ENCODE measurements at regions of chr11 and their contacts with region 1.

Region 1: GRCh38 chr11:102914238-102915043 is 39.7 kb upstream of the MMP12 start:
- DNase-seq: peak; percentile 27
- H3K4me3 Mint-ChIP-seq: no peak overlapping the region
- H3K27ac Mint-ChIP-seq: no peak overlapping the region
- H3K4me1 Mint-ChIP-seq: no peaks in the 10 kb centered on the region
- H3K27me3 Mint-ChIP-seq: peaks cover 28% of the 10 kb centered on the region
- CTCF ChIP-seq: peak; percentile 45

Region 2: DNA sequence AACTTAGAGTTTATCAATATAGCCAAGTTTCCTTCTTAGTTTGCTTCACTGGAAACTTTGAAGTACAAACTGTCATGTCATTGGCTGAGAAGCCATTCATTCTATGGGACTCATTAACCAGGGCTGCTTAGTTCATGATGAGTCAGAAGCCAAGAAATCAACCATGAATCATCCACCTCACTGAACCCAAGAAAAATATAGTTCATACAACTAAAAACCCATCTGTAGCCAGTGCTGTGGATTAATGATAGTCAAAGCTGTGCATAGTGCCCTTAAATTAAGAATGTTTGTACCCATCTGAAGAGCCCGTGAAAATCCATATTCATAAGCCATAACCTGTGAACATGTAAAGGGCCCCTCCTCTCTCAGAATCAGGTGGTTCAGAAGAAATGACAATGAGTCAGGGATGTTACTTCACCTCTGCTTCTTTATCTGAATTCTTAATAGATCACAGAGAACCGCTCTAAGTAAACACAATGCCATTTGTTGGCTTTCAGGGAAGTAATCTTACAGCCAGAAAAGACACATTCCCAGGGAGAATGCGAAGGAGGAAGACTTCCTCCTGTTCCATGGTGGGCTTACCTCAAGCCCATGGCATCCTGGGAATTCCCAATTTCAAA is 314.7 kb before region 1 on chr11:
- CTCF ChIA-PET with region 1: no interaction called
- intact Hi-C with region 1: no loop called
- DNase-seq: peak; percentile 48
- H3K4me3 Mint-ChIP-seq: no peak overlapping the region
- H3K27ac Mint-ChIP-seq: peak overlapping the region; percentile 70
- H3K4me1 Mint-ChIP-seq: peaks cover 46% of the 10 kb centered on the region
- H3K27me3 Mint-ChIP-seq: no peaks in the 10 kb centered on the region
- CTCF ChIP-seq: no peak

Region 3: GRCh38 chr11:102831489-102832440 is 82.7 kb before region 1 on chr11:
- CTCF ChIA-PET with region 1: interaction called, 11 read pairs
- intact Hi-C with region 1: loop called (anchors 2 kb)
- DNase-seq: peak; percentile 79
- H3K4me3 Mint-ChIP-seq: peak overlapping the region; percentile 72
- H3K27ac Mint-ChIP-seq: no peak overlapping the region
- H3K4me1 Mint-ChIP-seq: peaks cover 34% of the 10 kb centered on the region
- H3K27me3 Mint-ChIP-seq: peaks cover 12% of the 10 kb centered on the region
- CTCF ChIP-seq: peak; percentile 57

Measured in Calu3 (cell line).